ENCODE measurements at regions of chr2 and their contacts with region 1.

Region 1: DNA sequence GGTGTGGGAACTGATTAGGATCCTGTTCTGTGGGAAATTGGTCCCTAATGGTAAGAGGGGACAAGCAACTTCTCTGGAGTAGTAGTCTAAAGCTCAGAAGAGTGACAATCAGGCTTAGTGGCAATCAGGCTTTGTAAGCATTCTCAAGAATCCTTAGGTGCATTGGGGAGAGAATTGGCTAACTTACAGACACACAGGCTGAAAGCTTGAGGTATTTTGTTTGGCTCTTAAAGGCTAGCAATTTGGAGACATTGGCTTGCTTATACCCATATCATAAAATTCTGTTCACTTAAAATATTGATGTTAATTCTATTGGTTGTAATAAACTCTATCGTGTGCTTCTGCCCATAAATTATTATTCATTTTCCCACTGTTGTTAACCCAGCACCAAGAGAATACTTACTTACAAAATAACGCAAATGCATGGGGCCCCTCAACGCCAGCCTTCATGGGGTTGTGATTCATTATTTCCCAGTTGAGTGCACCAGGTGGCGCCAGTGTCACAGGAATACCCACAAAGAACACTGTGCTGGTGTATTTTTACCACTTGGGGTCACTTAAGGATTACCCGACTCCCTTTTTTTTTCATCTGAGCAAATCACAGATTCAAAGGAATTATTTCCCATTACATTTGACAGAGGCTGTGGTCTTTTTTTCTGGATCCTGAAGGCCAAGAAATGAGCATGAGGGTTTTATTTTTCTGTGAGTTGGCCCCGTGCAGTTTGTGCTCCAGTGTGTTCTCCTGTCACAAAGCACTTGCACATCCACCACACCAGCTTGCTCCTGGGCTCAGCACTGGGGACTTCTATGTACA is 45.5 kb downstream of the DDX1 start:
- DNase-seq: peak; percentile 74 to 83 (median 78)
- ATAC-seq: peak; percentile 97
- H3K4me3 ChIP-seq: no peak overlapping the region
- H3K27ac ChIP-seq: no peak overlapping the region
- H3K4me1 ChIP-seq: no peaks in the 10 kb centered on the region; a peak in 1 of 5 replicates
- H3K27me3 ChIP-seq: no peaks in the 10 kb centered on the region
- CTCF ChIP-seq: peak; percentile 90 to 99 (median 99)
- EP300 ChIP-seq: no peak
- POLR2A ChIP-seq: no peak
- RAD21 ChIP-seq: peak; percentile 90 to 94

Region 2: GRCh38 chr2:15595342-15595905 is 41.8 kb before region 1 on chr2:
- CTCF ChIA-PET with region 1: no interaction called
- POLR2A ChIA-PET with region 1: no interaction called
- in situ Hi-C with region 1: no loop called
- intact Hi-C with region 1: no loop called
- DNase-seq: no peak
- ATAC-seq: no peak
- H3K4me3 ChIP-seq: no peak overlapping the region
- H3K27ac ChIP-seq: no peak overlapping the region
- H3K4me1 ChIP-seq: peaks cover 4 to 16% of the 10 kb centered on the region in 2 experiments; a peak in 4 of 5 replicates
- H3K27me3 ChIP-seq: no peaks in the 10 kb centered on the region
- CTCF ChIP-seq: no peak
- EP300 ChIP-seq: no peak
- POLR2A ChIP-seq: no peak
- RAD21 ChIP-seq: no peak

Region 3: DNA sequence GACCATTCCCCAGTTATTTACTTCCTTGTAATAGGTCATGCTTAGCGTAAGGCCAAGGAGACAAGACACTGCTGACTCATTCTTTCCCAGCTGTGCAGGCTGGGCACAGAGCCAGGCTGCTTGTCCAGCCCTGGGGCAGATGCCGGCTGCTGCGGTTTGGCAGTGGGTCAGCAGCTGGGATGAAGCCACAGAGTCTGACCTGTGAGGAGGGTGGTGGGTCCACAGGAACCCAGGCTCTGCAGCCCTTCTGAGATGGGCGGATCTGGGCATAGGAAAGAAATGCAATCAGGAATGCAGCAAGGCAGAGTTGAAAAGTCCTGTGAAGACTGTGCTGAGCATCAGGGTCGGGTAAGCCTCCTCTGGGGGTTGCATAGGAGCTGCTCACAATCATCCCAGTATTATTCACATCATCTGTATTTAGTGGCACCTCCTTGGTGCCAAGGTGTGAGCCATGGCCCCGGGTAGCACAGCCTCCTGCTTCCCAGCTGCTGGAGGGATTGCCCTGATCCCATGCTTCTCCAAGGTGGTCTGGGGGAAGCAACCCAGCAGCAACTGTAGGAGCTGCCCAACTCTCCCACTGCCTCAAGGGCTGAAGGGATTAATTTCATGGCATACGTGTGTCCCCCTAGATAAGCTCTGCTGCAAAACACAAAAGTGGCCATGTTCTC is 93.5 kb after region 1 on chr2:
- CTCF ChIA-PET with region 1: no interaction called
- POLR2A ChIA-PET with region 1: no interaction called
- in situ Hi-C with region 1: no loop called
- intact Hi-C with region 1: loop called (anchors 5 kb)
- DNase-seq: peak; percentile 64 to 86 (median 73)
- ATAC-seq: peak; percentile 91
- H3K4me3 ChIP-seq: no peak overlapping the region
- H3K27ac ChIP-seq: no peak overlapping the region
- H3K4me1 ChIP-seq: peaks cover 4 to 7% of the 10 kb centered on the region in 2 experiments; a peak in 4 of 5 replicates
- H3K27me3 ChIP-seq: peaks cover 10 to 62% of the 10 kb centered on the region in 2 experiments; a peak in 4 of 5 replicates
- CTCF ChIP-seq: no peak
- EP300 ChIP-seq: peak; percentile 30; the same call in 1 of the 2 replicates
- POLR2A ChIP-seq: no peak
- RAD21 ChIP-seq: no peak

Region 4: DNA sequence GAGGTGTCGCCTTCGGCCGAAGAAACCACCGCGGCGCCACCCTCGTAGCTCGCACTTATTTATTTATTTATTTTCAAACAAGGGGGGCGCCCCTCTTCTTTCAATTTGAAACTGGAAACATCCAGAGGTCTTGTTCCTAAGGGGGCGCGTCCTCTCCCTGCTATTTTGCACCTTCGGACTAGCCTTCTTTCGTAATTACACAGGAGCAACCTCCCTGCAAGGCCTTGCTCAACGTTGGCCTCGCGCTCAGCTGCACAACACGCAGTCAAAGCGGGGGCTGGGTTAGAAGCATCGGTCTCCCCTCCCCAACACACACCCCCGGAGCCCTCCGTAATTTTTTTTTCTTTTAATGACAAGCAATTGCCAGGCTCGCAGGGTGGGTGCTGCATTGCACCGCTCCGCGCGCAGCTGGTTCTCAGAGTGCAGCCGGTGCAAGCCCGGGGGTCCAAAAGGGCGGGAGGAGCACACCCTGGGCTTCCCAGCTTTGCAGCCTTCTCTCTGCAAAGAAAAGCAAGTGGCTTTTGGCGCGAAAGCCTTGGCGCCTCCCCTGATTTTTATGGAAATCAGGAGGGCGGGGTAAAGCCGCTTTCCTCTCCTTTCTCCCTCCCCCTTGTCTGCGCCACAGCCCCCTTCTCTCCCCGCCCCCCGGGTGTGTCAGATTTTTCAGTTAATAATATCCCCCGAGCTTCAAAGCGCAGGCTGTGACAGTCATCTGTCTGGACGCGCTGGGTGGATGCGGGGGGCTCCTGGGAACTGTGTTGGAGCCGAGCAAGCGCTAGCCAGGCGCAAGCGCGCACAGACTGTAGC is 302.9 kb after region 1 on chr2 and contains the start of gene MYCN:
- CTCF ChIA-PET with region 1: no interaction called
- POLR2A ChIA-PET with region 1: no interaction called
- in situ Hi-C with region 1: no loop called
- intact Hi-C with region 1: loop called (anchors 2 kb)
- DNase-seq: peak in 1 of 4 experiments; percentile 12
- ATAC-seq: peak; percentile 60
- H3K4me3 ChIP-seq: no peak within 1 kb of the TSS
- H3K27ac ChIP-seq: no peak within 1 kb of the TSS
- H3K4me1 ChIP-seq: peaks cover 0 to 15% of the 10 kb centered on the region in 2 experiments; a peak in 2 of 5 replicates
- H3K27me3 ChIP-seq: peaks cover 10 to 40% of the 10 kb centered on the region in 2 experiments; a peak in 4 of 5 replicates
- CTCF ChIP-seq: peak; percentile 72 to 79 (median 77); a peak in 5 of 6 replicates
- EP300 ChIP-seq: no peak
- POLR2A ChIP-seq: no peak
- RAD21 ChIP-seq: peak; percentile 77 to 82
- polyA plus RNA-seq, gene MYCN: not detected

Region 5: DNA sequence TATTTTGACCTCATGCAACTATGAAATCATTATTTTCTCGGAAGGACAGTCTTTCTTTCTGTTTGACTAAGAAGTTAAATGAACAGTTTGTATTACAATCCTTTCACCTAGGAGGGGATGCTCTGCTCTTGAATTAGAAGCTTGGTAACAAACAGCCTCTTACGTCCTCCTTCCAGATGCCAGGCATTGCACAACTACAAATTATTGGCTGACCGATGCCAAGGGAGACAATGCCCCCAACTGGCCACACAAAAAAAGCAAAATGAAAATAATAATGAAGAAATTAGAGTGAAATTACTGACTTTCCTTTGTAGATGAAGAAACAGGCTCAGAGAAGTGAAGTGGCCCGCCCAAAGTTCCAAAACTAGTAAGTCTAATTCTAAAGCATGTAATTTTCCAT is 850.5 kb after region 1 on chr2:
- CTCF ChIA-PET with region 1: no interaction called
- POLR2A ChIA-PET with region 1: no interaction called
- in situ Hi-C with region 1: loop called (anchors 10 kb)
- intact Hi-C with region 1: loop called (anchors 2 kb)
- DNase-seq: peak in 1 of 4 experiments; percentile 12
- ATAC-seq: no peak
- H3K4me3 ChIP-seq: no peak overlapping the region
- H3K27ac ChIP-seq: no peak overlapping the region
- H3K4me1 ChIP-seq: no peaks in the 10 kb centered on the region
- H3K27me3 ChIP-seq: no peaks in the 10 kb centered on the region
- CTCF ChIP-seq: peak; percentile 30 to 55 (median 39)
- EP300 ChIP-seq: no peak
- POLR2A ChIP-seq: no peak
- RAD21 ChIP-seq: peak; percentile 70 to 73

Region 6: GRCh38 chr2:16513626-16514025 is 876.4 kb after region 1 on chr2:
- CTCF ChIA-PET with region 1: no interaction called
- POLR2A ChIA-PET with region 1: no interaction called
- in situ Hi-C with region 1: no loop called
- intact Hi-C with region 1: loop called (anchors 10 kb)
- DNase-seq: no peak
- ATAC-seq: no peak
- H3K4me3 ChIP-seq: no peak overlapping the region
- H3K27ac ChIP-seq: no peak overlapping the region
- H3K4me1 ChIP-seq: no peaks in the 10 kb centered on the region
- H3K27me3 ChIP-seq: peaks cover 1 to 2% of the 10 kb centered on the region in 2 experiments; a peak in 2 of 5 replicates
- CTCF ChIP-seq: no peak
- EP300 ChIP-seq: no peak
- POLR2A ChIP-seq: no peak
- RAD21 ChIP-seq: no peak

Measured in K562 (cell line).